Gastrocnemius medialis (tissue), 4 donors: ENCODE measurements at regions of chr17 and their contacts with region 1.

Region 1: GRCh38 chr17:35808962-35809854 is at the start of gene TAF15:
- DNase-seq: peak; percentile 97
- ATAC-seq: peak; percentile 97
- H3K4me3 ChIP-seq: peak within 1 kb of the TSS; percentile 75 to 98 (median 88)
- H3K27ac ChIP-seq: peak within 1 kb of the TSS; percentile 90 to 99 (median 94)
- H3K4me1 ChIP-seq: peaks cover 21 to 35% of the 10 kb centered on the region in 2 donors
- H3K27me3 ChIP-seq: no peaks in the 10 kb centered on the region
- CTCF ChIP-seq: peak; percentile 50 to 84 (median 83)
- POLR2A ChIP-seq: peak; percentile 99 to 100
- total RNA-seq, gene TAF15: 25.2 to 39.5 (median 31.6) TPM

Region 2: GRCh38 chr17:35578197-35578928 is 230.8 kb before region 1 on chr17 and contains the start of gene PEX12:
- in situ Hi-C with region 1: no loop called
- intact Hi-C with region 1: loop called (anchors 5 kb)
- DNase-seq: peak; percentile 87 to 91
- ATAC-seq: peak; percentile 98 to 100
- H3K4me3 ChIP-seq: peak within 1 kb of the TSS; percentile 68 to 88 (median 80)
- H3K27ac ChIP-seq: peak within 1 kb of the TSS; percentile 85 to 94 (median 90)
- H3K4me1 ChIP-seq: peaks cover 18 to 24% of the 10 kb centered on the region in 2 donors
- H3K27me3 ChIP-seq: no peaks in the 10 kb centered on the region
- CTCF ChIP-seq: peak in 1 of 5 experiments; percentile 15
- POLR2A ChIP-seq: peak; percentile 70 to 84
- total RNA-seq, gene PEX12: 4.4 to 14.2 (median 6.2) TPM

Region 3: DNA sequence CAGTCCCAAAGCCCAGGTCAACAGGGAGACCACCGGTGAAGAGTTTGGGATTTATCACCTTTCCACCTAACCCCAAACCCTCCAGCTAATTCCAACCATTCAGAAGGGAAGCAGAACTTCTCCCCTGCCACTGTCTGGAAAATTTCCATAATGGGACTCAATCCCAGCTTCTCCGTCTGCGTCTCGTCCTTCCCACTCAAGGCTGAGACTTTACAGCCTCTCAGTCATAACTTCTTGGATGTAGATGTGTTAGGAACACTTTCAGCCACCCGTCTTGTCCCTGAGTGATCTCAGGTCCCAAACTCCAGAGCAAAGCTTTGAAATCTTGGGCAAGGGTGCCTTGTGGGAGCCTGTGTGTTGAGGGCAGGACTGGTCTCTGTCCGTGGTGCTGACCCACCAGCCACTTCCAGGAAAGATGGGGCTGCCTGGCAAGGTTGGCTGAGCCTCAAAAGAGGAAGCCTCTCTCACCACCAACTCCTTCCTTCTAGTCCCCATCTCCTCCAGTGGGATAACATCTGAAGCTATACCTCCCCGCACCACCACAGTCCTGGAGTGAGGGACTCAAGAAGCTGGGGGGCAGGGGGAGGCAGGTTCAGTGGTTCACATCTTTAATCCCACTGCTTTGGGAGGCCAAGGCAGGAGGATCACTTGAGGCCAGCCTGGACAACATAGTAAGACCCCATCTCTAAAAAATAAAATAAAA is 65.4 kb before region 1 on chr17:
- in situ Hi-C with region 1: no loop called
- intact Hi-C with region 1: no loop called
- DNase-seq: no peak
- ATAC-seq: no peak
- H3K4me3 ChIP-seq: no peak overlapping the region
- H3K27ac ChIP-seq: no peak overlapping the region
- H3K4me1 ChIP-seq: peaks cover 11 to 16% of the 10 kb centered on the region in 2 donors
- H3K27me3 ChIP-seq: peaks cover 0 to 7% (median 4%) of the 10 kb centered on the region in 3 donors
- CTCF ChIP-seq: no peak
- POLR2A ChIP-seq: no peak

Region 4: DNA sequence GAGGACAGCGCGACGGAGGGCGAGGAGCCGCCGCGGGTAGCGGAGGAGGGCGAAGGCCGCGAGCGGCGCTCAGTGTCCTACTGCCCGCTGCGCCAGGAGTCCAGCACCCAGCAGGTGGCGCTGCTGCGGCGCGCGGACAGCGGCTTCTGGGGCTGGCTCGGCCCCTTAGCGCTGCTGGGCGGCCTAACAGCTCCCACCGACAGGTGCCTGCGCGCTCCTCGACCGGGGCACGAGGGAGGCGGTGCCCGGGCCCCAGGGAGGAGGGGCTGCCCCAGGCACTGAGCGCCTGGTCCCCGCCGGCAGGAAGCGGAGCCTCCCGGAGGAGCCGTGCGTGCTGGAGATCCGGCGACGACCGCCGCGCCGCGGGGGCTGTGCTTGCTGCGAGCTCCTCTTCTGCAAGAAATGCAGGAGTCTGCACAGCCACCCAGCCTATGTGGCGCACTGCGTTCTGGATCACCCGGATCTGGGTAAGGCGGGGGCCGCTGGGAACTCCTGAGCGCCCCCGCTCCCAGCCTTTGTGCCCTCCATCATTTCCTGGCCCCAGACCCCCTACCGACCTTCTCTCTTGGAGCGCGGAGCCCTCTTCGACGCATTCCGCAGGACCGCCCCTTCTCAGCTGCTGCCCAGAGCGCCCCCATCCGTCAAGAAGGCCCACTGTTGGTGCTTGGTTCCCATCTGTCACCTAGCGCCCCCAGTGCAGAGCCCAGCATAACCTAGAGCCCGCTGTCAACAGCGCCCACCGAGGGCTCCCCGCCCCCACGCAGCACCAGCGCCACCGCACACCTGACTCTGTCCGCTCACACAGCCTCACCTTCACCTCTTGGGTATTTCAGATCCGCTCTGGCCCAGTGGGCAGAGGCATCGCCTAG is 44.9 kb before region 1 on chr17:
- in situ Hi-C with region 1: loop called (anchors 5 to 10 kb)
- intact Hi-C with region 1: loop called (anchors 1 kb)
- DNase-seq: peak; percentile 61 to 82
- ATAC-seq: peak; percentile 90 to 95
- H3K4me3 ChIP-seq: peak overlapping the region; percentile 58 to 72 (median 64)
- H3K27ac ChIP-seq: peak overlapping the region; percentile 13 to 50 (median 42)
- H3K4me1 ChIP-seq: peaks cover 9 to 11% of the 10 kb centered on the region in 2 donors
- H3K27me3 ChIP-seq: no peaks in the 10 kb centered on the region
- CTCF ChIP-seq: peak; percentile 90 to 98 (median 97)
- POLR2A ChIP-seq: no peak

Region 5: DNA sequence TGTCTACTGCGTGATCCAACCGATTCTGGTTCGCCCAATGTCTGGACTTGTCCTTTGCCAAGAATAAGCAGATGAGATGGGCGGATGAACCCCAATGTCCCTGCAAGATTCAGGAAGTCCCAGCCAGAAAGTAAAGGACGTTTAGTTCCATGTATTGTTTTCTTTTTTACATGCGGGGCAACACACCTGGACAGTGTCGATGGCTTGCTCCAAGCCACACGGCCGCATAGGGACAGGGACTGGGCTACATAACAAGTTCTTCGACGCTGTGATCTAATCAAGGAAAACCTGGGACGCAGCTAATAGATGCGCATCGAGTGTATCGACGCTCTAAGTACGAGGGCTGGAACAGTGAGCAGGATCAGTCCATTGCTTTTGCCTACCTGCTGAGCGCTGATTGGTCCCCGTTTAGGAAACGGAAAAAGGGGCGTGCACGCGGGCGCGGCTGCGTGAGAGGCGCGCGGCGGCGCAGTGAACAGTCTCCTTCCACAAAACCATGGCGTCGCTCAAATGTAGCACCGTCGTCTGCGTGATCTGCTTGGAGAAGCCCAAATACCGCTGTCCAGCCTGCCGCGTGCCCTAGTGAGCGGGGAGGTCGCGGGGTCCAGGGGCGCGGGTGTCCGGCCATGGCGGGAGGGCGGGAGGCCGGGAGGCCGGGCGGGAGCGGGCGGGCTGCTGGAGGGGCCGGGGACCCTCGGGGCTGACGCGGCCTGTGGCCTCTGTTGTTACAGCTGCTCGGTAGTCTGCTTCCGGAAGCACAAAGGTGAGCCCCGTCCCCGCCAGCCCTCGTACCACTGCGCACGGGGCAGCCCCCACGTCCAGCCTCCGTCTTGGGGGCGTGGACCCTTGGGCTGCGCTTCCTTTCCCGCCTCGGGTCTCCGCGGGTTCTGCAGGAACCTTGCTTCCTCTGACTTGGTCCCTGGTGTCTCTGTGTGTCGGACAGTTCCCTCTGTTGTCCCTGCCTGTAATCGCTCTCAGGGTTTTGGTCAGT is 677.3 kb after region 1 on chr17 and contains the start of gene ZNHIT3:
- in situ Hi-C with region 1: no loop called
- intact Hi-C with region 1: loop called (anchors 10 kb)
- DNase-seq: peak; percentile 84 to 88
- ATAC-seq: peak; percentile 96 to 97
- H3K4me3 ChIP-seq: peak within 1 kb of the TSS; percentile 80 to 92 (median 86)
- H3K27ac ChIP-seq: peak within 1 kb of the TSS; percentile 76 to 91 (median 82)
- H3K4me1 ChIP-seq: peaks cover 24 to 34% of the 10 kb centered on the region in 2 donors
- H3K27me3 ChIP-seq: peaks cover 0 to 3% (median 0%) of the 10 kb centered on the region in 3 donors
- CTCF ChIP-seq: no peak
- POLR2A ChIP-seq: peak; percentile 22 to 42
- total RNA-seq, gene ZNHIT3: 33.4 to 52.7 (median 39.3) TPM